ENCODE measurements at regions of chr7 and their contacts with region 1.

Region 1: GRCh38 chr7:73726083-73726466 is 6.6 kb upstream of the STX1A start:
- DNase-seq: no peak
- ATAC-seq: peak; percentile 2
- H3K4me3 ChIP-seq: no peak overlapping the region
- H3K4me3 Mint-ChIP-seq: no peak overlapping the region
- H3K27ac ChIP-seq: no peak overlapping the region
- H3K27ac Mint-ChIP-seq: no peak overlapping the region
- H3K4me1 ChIP-seq: no peaks in the 10 kb centered on the region
- H3K4me1 Mint-ChIP-seq: peaks cover 0 to 2% (median 0%) of the 10 kb centered on the region in 7 donors
- H3K27me3 ChIP-seq: no peaks in the 10 kb centered on the region
- H3K27me3 Mint-ChIP-seq: peaks cover 0 to 25% (median 9%) of the 10 kb centered on the region in 5 donors

Region 2: GRCh38 chr7:73329861-73330581 is 396.1 kb before region 1 on chr7:
- CTCF ChIA-PET with region 1: no interaction called
- POLR2A ChIA-PET with region 1: no interaction called
- intact Hi-C with region 1: loop called in 1 of 2 experiments (anchors 2 kb)
- DNase-seq: no peak
- ATAC-seq: no peak
- H3K4me3 ChIP-seq: no peak overlapping the region
- H3K4me3 Mint-ChIP-seq: no peak overlapping the region
- H3K27ac ChIP-seq: no peak overlapping the region
- H3K27ac Mint-ChIP-seq: peak overlapping the region in 1 of 9 donors; percentile 42
- H3K4me1 ChIP-seq: no peaks in the 10 kb centered on the region
- H3K4me1 Mint-ChIP-seq: peaks cover 0 to 4% (median 0%) of the 10 kb centered on the region in 7 donors
- H3K27me3 ChIP-seq: no peaks in the 10 kb centered on the region
- H3K27me3 Mint-ChIP-seq: peaks cover 0 to 9% (median 0%) of the 10 kb centered on the region in 5 donors

Region 3: DNA sequence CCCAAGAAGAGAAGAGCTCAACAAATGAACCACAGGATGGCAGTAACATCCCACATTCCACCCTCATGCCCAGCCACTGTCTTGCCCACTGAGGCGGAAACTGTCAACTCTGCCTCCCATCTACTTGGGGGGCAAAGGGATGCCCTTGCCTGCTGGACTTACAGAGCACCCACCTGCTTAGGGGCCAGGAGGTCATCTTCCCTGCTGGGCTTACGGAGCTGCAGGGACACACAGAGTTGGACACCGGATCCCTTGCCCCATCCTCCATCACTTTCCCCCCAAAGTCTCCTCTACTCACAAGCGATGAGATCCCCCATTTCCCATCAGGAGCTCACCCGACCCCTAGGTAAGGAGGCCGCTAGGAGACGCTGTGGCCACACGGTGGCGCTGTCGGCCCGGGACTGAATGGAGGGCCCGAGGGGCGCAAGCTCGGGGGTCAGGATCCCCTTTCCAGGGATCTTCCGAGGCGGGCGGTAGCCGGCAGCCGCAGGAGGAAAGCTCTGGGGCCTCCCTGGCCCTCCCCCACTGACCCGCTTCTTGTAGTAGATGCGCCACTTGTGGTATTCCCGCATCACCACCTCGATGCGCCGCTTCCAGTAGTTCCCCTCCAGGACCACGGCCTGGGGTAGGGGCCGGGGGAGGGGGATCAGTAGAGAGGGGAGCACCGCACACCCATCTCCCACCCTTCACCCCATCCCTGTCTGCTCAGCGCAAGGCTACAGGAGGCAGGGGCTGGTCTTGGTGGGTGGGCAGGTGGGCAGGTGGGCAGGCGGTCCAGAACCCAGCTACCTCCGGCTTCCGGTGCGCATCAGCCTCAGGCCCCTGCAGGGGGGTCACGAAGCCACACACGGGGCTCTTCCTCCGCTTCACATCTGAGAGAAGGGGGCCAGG is 119.0 kb before region 1 on chr7:
- CTCF ChIA-PET with region 1: interaction called, 28 read pairs
- POLR2A ChIA-PET with region 1: interaction called, 4 read pairs
- intact Hi-C with region 1: loop called (anchors 1 kb)
- DNase-seq: peak; percentile 42 to 77 (median 61)
- ATAC-seq: peak; percentile 85
- H3K4me3 ChIP-seq: no peak overlapping the region
- H3K4me3 Mint-ChIP-seq: no peak overlapping the region
- H3K27ac ChIP-seq: no peak overlapping the region
- H3K27ac Mint-ChIP-seq: peak overlapping the region in 1 of 9 donors; percentile 38
- H3K4me1 ChIP-seq: no peaks in the 10 kb centered on the region
- H3K4me1 Mint-ChIP-seq: peaks cover 0 to 3% (median 0%) of the 10 kb centered on the region in 7 donors
- H3K27me3 ChIP-seq: no peaks in the 10 kb centered on the region
- H3K27me3 Mint-ChIP-seq: peaks cover 4 to 41% (median 20%) of the 10 kb centered on the region in 5 donors

Region 4: DNA sequence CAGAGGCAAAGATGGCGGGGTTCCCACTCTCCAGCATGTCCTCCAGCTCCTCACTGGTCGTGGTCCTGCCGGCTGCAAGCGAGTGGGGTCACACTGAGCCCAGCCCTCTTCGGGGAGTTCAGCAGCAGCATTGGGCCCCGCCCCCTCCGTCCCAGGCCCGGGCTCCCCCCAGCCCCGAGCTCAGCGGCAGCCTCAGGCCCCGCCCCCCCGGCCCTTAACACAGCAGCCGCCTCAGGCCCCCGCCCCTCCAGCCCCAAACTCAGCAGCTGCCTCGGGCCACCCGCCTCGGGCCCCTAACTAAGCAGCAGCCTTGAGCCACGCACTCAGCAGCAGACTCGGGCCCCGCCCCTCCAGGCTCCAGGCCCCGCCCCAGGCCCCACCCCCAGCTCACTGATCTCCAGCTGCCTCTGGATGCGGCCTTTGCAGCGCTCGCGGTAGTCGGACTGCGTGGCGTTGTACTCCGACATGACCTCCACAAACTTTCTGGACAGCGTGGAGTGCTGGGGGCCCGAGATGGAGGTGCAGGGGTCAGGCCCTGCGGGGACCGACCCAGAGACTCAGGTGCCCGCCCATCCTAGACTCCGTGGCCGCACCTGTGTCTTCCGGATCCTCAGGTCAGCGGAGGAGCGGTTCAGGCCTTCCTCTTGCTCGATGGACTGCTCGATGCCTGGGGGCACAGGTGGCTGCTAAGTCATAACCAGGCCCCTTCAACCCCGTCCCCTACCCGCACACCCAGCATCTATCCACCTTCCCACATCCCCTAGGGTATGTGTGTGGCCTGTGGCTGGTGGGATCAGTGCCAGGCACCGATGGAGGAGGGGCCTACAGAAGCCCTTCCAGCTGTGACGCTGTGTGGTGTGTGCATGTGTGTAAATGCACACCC is 22.1 kb before region 1 on chr7:
- CTCF ChIA-PET with region 1: interaction called, 5 read pairs
- POLR2A ChIA-PET with region 1: interaction called, 3 read pairs
- intact Hi-C with region 1: loop called in 1 of 2 experiments (anchors 2 kb)
- DNase-seq: peak in 6 of 9 donors; percentile 29 to 54 (median 42)
- ATAC-seq: peak; percentile 63
- H3K4me3 ChIP-seq: no peak overlapping the region
- H3K4me3 Mint-ChIP-seq: peak overlapping the region in 7 of 10 donors; percentile 16 to 53 (median 49)
- H3K27ac ChIP-seq: no peak overlapping the region
- H3K27ac Mint-ChIP-seq: no peak overlapping the region
- H3K4me1 ChIP-seq: no peaks in the 10 kb centered on the region
- H3K4me1 Mint-ChIP-seq: peaks cover 4 to 14% (median 8%) of the 10 kb centered on the region in 7 donors
- H3K27me3 ChIP-seq: no peaks in the 10 kb centered on the region
- H3K27me3 Mint-ChIP-seq: no peaks in the 10 kb centered on the region

Measured in naive thymus-derived CD4-positive, alpha-beta T cell (primary cell).